ENCODE measurements at regions of chr12 and their contacts with region 1.

Region 1: DNA sequence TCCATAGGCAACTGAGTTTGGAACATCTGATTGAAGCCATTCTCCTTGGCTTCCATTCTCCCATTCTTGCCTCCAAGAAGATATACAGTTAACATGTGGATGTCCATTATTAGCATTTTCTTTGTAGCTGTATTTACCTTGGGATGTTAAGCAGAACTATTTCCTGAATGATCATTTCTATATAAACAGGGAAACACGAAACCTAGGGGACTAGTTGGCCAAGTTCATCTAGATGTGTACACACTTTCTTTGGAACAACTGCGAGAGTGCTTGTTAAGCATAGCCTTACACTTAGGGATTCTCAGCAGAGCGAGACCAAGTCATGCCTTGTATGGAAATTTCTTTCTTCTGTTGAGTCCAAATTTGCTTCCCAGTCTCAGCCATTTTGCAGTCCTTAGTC is 42.1 kb downstream of the DRAM1 start:
- DNase-seq: no peak
- ATAC-seq: no peak
- H3K4me3 ChIP-seq: no peak overlapping the region
- H3K27ac ChIP-seq: no peak overlapping the region
- H3K4me1 ChIP-seq: no peaks in the 10 kb centered on the region
- H3K27me3 ChIP-seq: no peaks in the 10 kb centered on the region
- CTCF ChIP-seq: no peak
- EP300 ChIP-seq: no peak
- POLR2A ChIP-seq: no peak
- RAD21 ChIP-seq: no peak

Region 2: GRCh38 chr12:101773650-101774162 is 145.7 kb before region 1 on chr12:
- CTCF ChIA-PET with region 1: interaction called, 8 read pairs
- POLR2A ChIA-PET with region 1: no interaction called
- in situ Hi-C with region 1: no loop called
- intact Hi-C with region 1: loop called (anchors 1 kb)
- DNase-seq: peak; percentile 64 to 78 (median 70)
- ATAC-seq: peak; percentile 91
- H3K4me3 ChIP-seq: no peak overlapping the region
- H3K27ac ChIP-seq: no peak overlapping the region
- H3K4me1 ChIP-seq: no peaks in the 10 kb centered on the region
- H3K27me3 ChIP-seq: no peaks in the 10 kb centered on the region
- CTCF ChIP-seq: peak; percentile 73 to 94 (median 82)
- EP300 ChIP-seq: 0 out of 2 replicates have a peak, but pooled peaks have one; percentile 21
- POLR2A ChIP-seq: no peak
- RAD21 ChIP-seq: peak; percentile 92 to 93

Region 3: GRCh38 chr12:102811110-102811737 is 891.8 kb after region 1 on chr12:
- CTCF ChIA-PET with region 1: interaction called, 3 read pairs
- POLR2A ChIA-PET with region 1: no interaction called
- in situ Hi-C with region 1: no loop called
- intact Hi-C with region 1: loop called (anchors 1 kb)
- DNase-seq: peak; percentile 43 to 57 (median 45)
- ATAC-seq: peak; percentile 88
- H3K4me3 ChIP-seq: no peak overlapping the region
- H3K27ac ChIP-seq: no peak overlapping the region
- H3K4me1 ChIP-seq: no peaks in the 10 kb centered on the region
- H3K27me3 ChIP-seq: no peaks in the 10 kb centered on the region
- CTCF ChIP-seq: peak; percentile 65 to 73 (median 72)
- EP300 ChIP-seq: no peak
- POLR2A ChIP-seq: no peak
- RAD21 ChIP-seq: peak; percentile 57 to 66

Measured in K562 (cell line).